ENCODE measurements at regions of chr5 and their contacts with region 1.

Region 1: GRCh38 chr5:143605403-143606005 is 202.0 kb upstream of the NR3C1 start:
- DNase-seq: peak; percentile 57
- H3K4me3 Mint-ChIP-seq: no peak overlapping the region
- H3K27ac Mint-ChIP-seq: peak overlapping the region; percentile 36
- H3K4me1 Mint-ChIP-seq: peaks cover 20% of the 10 kb centered on the region
- H3K27me3 Mint-ChIP-seq: peaks cover 19% of the 10 kb centered on the region

Region 2: GRCh38 chr5:143002459-143003328 is 602.8 kb before region 1 on chr5:
- CTCF ChIA-PET with region 1: no interaction called
- intact Hi-C with region 1: loop called (anchors 5 kb)
- DNase-seq: peak; percentile 82
- H3K4me3 Mint-ChIP-seq: peak overlapping the region; percentile 2
- H3K27ac Mint-ChIP-seq: peak overlapping the region; percentile 92
- H3K4me1 Mint-ChIP-seq: peaks cover 53% of the 10 kb centered on the region
- H3K27me3 Mint-ChIP-seq: no peaks in the 10 kb centered on the region

Region 3: DNA sequence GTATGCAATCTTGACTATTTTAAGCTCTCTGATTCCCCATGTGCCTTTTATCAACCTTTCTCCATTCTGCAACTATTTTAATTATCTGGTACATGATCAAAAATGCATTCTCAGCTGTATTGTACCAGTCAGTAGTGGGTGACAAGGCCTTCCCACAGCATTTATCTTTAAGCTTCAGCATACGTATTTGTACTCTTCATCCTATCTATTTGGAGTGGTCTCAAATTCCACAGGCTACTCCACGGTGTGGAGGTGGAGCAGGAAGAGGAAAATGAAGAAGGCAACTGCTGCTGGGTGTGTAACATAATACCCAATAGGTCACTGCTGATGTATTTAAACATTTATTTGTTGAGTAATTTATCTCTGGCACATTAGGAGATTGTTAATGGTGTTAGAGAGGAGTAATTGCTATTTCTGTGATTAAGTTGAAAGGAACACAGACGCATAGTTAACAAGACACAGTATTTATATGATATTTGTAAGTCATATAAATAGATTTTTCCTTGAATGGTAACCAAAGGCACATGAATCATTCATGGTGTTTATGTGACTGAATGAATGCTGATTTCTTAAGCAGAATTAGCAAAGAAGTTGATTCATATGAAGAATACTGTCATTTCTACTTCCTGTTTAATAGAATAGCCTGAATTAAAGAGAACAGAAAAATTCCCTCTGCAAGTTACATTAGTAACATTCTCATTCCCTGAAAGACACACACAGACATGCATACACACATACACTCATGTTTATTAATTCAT is 48.3 kb before region 1 on chr5:
- CTCF ChIA-PET with region 1: no interaction called
- intact Hi-C with region 1: loop called (anchors 5 kb)
- DNase-seq: no peak
- H3K4me3 Mint-ChIP-seq: no peak overlapping the region
- H3K27ac Mint-ChIP-seq: no peak overlapping the region
- H3K4me1 Mint-ChIP-seq: peaks cover 6% of the 10 kb centered on the region
- H3K27me3 Mint-ChIP-seq: peaks cover 3% of the 10 kb centered on the region

Region 4: GRCh38 chr5:143679777-143680176 is 74.3 kb after region 1 on chr5:
- CTCF ChIA-PET with region 1: no interaction called
- intact Hi-C with region 1: loop called (anchors 2 kb)
- DNase-seq: no peak
- H3K4me3 Mint-ChIP-seq: no peak overlapping the region
- H3K27ac Mint-ChIP-seq: no peak overlapping the region
- H3K4me1 Mint-ChIP-seq: peaks cover 22% of the 10 kb centered on the region
- H3K27me3 Mint-ChIP-seq: peaks cover 5% of the 10 kb centered on the region

Measured in activated naive CD4-positive, alpha-beta T cell treated with anti-CD3 and anti-CD28 coated beads for 36 hours (primary cell).